Esophagus muscularis mucosa (tissue), 4 donors: ENCODE measurements at regions of chr19 and their contacts with region 1.

Region 1: DNA sequence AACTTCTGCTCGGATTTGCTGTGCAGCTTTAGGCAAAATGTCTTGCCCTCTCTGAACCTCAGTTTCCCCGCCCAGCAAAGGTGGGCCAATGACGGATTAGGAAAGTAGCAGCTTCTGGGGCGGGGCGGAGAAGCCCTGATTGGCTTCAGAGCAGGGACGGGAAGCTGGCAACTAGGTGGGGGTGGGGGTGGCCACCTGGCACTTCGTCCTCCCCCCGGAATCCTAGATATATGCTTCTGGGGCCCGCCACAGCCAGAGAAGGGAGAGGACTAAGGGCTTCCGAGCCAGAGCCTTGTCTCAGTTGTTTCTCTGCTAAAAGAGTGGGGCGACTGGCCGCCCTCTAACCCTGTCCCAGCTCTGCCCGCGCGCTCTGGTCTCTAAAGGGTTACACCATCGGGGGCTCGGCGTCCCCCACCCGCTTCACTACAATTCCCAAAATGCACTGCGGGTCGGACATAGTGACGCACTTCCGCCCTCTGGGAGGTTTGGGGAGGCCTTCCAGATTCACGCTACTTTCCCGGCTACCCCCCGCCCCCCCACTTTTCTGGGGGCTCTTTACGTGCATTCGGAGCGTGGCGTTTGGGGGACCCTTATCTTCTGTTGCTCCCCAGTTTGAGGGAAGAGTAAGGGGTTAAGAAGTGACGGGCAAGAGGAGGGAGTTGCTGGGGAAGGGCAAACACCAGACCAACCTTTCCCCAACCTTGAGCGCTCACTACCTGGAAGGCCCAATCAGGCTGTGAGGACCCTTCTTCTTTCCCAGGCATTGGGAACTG is 672 bp upstream of the IRF2BP1 start:
- DNase-seq: peak; percentile 98
- H3K4me3 ChIP-seq: peak overlapping the region; percentile 68 to 91 (median 78)
- H3K27ac ChIP-seq: peak overlapping the region; percentile 88 to 93 (median 90)
- H3K4me1 ChIP-seq: peaks cover 32 to 51% (median 49%) of the 10 kb centered on the region in 4 donors
- H3K27me3 ChIP-seq: no peaks in the 10 kb centered on the region
- CTCF ChIP-seq: peak in 1 of 3 experiments; percentile 28
- EP300 ChIP-seq: no peak
- POLR2A ChIP-seq: peak; percentile 32

Region 2: DNA sequence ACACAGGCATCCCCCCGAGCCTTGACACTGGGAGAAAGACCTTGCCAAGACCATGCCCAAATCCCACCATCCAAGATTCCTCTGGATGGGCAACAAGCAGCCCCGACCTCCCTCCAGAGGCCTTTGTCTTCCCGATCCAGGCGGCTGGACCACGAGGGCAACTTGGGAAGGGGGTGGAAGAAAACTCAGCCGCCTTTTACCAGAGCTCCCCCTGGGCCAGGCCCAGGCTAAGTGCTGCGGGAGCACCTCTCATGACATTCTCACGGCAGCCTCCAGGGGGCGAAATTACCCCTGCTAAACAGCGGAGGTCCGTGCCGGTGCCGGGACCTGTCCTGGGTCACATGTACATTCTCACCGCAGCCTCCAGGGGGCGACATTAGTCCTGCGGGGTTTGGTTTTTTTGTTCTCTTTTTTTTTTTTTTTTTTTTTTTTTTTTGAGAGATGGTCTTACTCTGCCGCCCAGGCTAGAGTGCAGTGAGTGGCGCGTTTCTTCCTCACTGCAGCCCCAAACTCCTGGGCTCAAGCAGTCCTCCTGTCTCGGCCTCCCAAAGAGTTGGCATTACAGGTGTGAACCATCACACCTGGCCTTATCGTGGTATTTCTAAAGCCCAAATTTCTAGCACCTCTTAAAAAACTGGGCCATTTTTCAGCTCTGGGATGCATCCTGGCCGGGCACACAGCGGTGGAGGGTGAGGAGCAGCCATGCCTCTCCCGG is 69.4 kb before region 1 on chr19:
- intact Hi-C with region 1: loop called (anchors 5 kb)
- DNase-seq: peak; percentile 98
- H3K4me3 ChIP-seq: no peak overlapping the region
- H3K27ac ChIP-seq: no peak overlapping the region
- H3K4me1 ChIP-seq: peaks cover 14 to 30% (median 23%) of the 10 kb centered on the region in 4 donors
- H3K27me3 ChIP-seq: peaks cover 0 to 34% (median 10%) of the 10 kb centered on the region in 4 donors
- CTCF ChIP-seq: peak; percentile 90 to 98 (median 94)
- EP300 ChIP-seq: no peak
- POLR2A ChIP-seq: no peak

Region 3: GRCh38 chr19:45862564-45863334 is 23.9 kb before region 1 on chr19 and contains the start of gene SYMPK:
- intact Hi-C with region 1: loop called (anchors 2 kb)
- DNase-seq: peak; percentile 99
- H3K4me3 ChIP-seq: peak within 1 kb of the TSS; percentile 94 to 100 (median 98)
- H3K27ac ChIP-seq: peak within 1 kb of the TSS; percentile 94 to 97 (median 96)
- H3K4me1 ChIP-seq: peaks cover 24 to 36% (median 33%) of the 10 kb centered on the region in 4 donors
- H3K27me3 ChIP-seq: peaks cover 10 to 31% (median 16%) of the 10 kb centered on the region in 4 donors
- CTCF ChIP-seq: no peak
- EP300 ChIP-seq: no peak
- POLR2A ChIP-seq: peak; percentile 36
- total RNA-seq, gene SYMPK: 22.0 to 44.2 (median 36.6) TPM